T-cell (primary cell): ENCODE measurements at regions of chr15 and their contacts with region 1.

Region 1: DNA sequence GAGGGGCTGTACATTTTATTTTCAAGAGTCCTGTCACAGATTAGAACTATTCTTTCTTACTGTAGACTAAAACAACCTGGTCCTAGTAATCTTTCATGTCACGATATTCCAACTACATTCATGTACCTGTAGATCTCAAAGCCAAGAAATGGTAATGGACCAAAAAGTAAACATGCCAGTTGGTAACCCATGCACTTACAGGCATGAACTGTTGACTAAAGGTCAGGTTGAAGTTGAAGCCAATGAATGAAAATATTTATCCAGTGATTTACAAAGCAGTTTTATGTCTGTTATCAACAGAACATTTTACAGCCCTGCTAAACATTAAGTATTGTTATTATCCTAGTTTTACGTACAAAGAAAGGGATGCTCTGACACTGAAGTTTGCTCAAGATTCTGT is 25.3 kb downstream of the LRRC57 start:
- DNase-seq: no peak
- ATAC-seq: no peak
- H3K4me3 ChIP-seq: no peak overlapping the region
- H3K4me3 Mint-ChIP-seq: no peak overlapping the region
- H3K27ac ChIP-seq: no peak overlapping the region
- H3K27ac Mint-ChIP-seq: no peak overlapping the region
- H3K4me1 ChIP-seq: no peaks in the 10 kb centered on the region
- H3K4me1 Mint-ChIP-seq: no peaks in the 10 kb centered on the region
- H3K27me3 ChIP-seq: no peaks in the 10 kb centered on the region
- H3K27me3 Mint-ChIP-seq: no peaks in the 10 kb centered on the region

Region 2: GRCh38 chr15:42759093-42759492 is 235.8 kb after region 1 on chr15:
- CTCF ChIA-PET with region 1: no interaction called
- POLR2A ChIA-PET with region 1: interaction called in 1 of 2 experiments, 13 read pairs
- DNase-seq: no peak
- ATAC-seq: no peak
- H3K4me3 ChIP-seq: no peak overlapping the region
- H3K4me3 Mint-ChIP-seq: no peak overlapping the region
- H3K27ac ChIP-seq: no peak overlapping the region
- H3K27ac Mint-ChIP-seq: no peak overlapping the region
- H3K4me1 ChIP-seq: no peaks in the 10 kb centered on the region
- H3K4me1 Mint-ChIP-seq: peaks cover 0 to 5% (median 0%) of the 10 kb centered on the region in 3 donors
- H3K27me3 ChIP-seq: no peaks in the 10 kb centered on the region
- H3K27me3 Mint-ChIP-seq: no peaks in the 10 kb centered on the region